Breast epithelium (tissue), 4 donors: ENCODE measurements at regions of chr6 and their contacts with region 1.

Region 1: GRCh38 chr6:154916857-154917256 is 78.3 kb upstream of the TIAM2 start:
- DNase-seq: no peak
- H3K4me3 ChIP-seq: no peak overlapping the region
- H3K27ac ChIP-seq: no peak overlapping the region
- H3K4me1 ChIP-seq: no peaks in the 10 kb centered on the region
- H3K27me3 ChIP-seq: no peaks in the 10 kb centered on the region
- CTCF ChIP-seq: no peak
- POLR2A ChIP-seq: no peak

Region 2: DNA sequence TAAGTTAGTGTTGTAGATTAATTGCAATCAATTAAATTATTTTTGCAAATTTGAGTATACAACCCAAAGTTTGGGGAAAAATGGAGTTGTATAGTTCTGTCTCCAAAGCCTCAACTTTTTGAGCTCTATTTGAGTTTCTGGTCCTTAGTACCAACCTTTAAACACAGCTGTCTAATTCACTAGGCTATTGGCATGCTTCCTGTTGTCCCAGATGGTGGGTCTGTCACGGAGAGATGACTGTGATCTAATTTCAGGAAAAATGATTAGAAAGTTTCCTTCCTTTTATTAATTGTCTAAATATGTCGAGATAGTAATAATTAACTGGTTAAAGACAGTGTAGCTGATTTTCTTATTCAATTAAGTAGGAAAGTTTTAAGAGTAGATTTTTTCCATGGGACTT is 74.0 kb before region 1 on chr6:
- intact Hi-C with region 1: no loop called
- DNase-seq: no peak
- H3K4me3 ChIP-seq: no peak overlapping the region
- H3K27ac ChIP-seq: no peak overlapping the region
- H3K4me1 ChIP-seq: no peaks in the 10 kb centered on the region
- H3K27me3 ChIP-seq: no peaks in the 10 kb centered on the region
- CTCF ChIP-seq: no peak
- POLR2A ChIP-seq: no peak

Region 3: GRCh38 chr6:154864066-154864430 is 52.8 kb before region 1 on chr6:
- intact Hi-C with region 1: loop called (anchors 2 kb)
- DNase-seq: no peak
- H3K4me3 ChIP-seq: no peak overlapping the region
- H3K27ac ChIP-seq: no peak overlapping the region
- H3K4me1 ChIP-seq: no peaks in the 10 kb centered on the region
- H3K27me3 ChIP-seq: no peaks in the 10 kb centered on the region
- CTCF ChIP-seq: no peak
- POLR2A ChIP-seq: no peak

Region 4: GRCh38 chr6:156579564-156579963 is 1662.7 kb after region 1 on chr6:
- intact Hi-C with region 1: loop called (anchors 5 kb)
- DNase-seq: no peak
- H3K4me3 ChIP-seq: no peak overlapping the region
- H3K27ac ChIP-seq: no peak overlapping the region
- H3K4me1 ChIP-seq: no peaks in the 10 kb centered on the region
- H3K27me3 ChIP-seq: no peaks in the 10 kb centered on the region
- CTCF ChIP-seq: no peak
- POLR2A ChIP-seq: no peak